ENCODE measurements at regions of chr19 and their contacts with region 1.

Region 1: DNA sequence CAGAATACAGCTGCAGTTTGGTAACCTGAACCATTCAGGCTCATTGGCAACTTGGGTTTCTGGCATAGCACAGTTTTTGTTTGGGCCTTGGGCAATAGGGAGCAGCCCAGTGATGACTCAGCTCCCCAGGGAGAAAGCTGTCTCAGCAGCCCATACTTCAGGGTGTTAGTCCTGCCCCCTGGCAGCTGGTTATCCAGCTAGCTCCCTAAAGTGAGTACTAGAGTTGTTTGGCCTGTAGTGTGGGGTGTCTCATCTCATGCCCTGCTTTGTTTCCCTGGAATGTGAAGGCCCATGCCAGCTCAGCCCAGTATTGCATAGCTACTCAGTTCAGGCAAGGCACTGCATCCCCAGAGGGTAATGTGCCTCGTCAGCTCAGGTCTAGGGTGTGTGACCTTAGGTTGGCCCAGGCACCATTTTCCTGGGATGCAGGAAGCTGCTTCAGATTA is 18.2 kb upstream of the ZNF543 start:
- DNase-seq: peak; percentile 98
- H3K4me3 Mint-ChIP-seq: peak overlapping the region; percentile 50
- H3K27ac Mint-ChIP-seq: peak overlapping the region; percentile 84
- H3K4me1 Mint-ChIP-seq: peaks cover 27% of the 10 kb centered on the region
- H3K27me3 Mint-ChIP-seq: no peaks in the 10 kb centered on the region
- CTCF ChIP-seq: no peak

Region 2: DNA sequence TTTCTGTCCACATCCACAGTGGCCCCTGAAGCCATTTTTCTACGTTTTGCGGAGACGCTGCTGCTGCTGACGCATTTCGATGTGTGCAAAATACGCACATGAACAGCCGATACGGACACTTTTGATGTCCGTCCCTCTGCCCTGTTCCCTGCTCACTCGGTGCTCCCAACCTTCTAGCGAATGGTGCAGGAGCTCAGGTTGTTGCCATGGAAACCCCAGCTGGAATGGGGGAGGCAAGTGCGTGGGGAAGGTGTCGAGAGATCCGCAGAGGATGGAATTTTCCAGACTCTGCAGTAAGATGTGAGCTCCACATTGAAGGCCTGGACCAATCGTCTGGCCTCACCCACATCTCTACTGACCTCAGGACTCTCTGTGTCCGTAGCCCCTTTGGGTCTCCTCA is 291.5 kb before region 1 on chr19:
- CTCF ChIA-PET with region 1: no interaction called
- POLR2A ChIA-PET with region 1: no interaction called
- intact Hi-C with region 1: no loop called
- DNase-seq: no peak
- H3K4me3 Mint-ChIP-seq: no peak overlapping the region
- H3K27ac Mint-ChIP-seq: no peak overlapping the region
- H3K4me1 Mint-ChIP-seq: no peaks in the 10 kb centered on the region
- H3K27me3 Mint-ChIP-seq: no peaks in the 10 kb centered on the region
- CTCF ChIP-seq: no peak

Region 3: GRCh38 chr19:57279418-57280066 is 22.5 kb before region 1 on chr19:
- CTCF ChIA-PET with region 1: interaction called, 5 read pairs
- POLR2A ChIA-PET with region 1: interaction called, 30 read pairs
- intact Hi-C with region 1: loop called (anchors 1 kb)
- DNase-seq: peak; percentile 99
- H3K4me3 Mint-ChIP-seq: no peak overlapping the region
- H3K27ac Mint-ChIP-seq: no peak overlapping the region
- H3K4me1 Mint-ChIP-seq: peaks cover 12% of the 10 kb centered on the region
- H3K27me3 Mint-ChIP-seq: no peaks in the 10 kb centered on the region
- CTCF ChIP-seq: no peak

Region 4: DNA sequence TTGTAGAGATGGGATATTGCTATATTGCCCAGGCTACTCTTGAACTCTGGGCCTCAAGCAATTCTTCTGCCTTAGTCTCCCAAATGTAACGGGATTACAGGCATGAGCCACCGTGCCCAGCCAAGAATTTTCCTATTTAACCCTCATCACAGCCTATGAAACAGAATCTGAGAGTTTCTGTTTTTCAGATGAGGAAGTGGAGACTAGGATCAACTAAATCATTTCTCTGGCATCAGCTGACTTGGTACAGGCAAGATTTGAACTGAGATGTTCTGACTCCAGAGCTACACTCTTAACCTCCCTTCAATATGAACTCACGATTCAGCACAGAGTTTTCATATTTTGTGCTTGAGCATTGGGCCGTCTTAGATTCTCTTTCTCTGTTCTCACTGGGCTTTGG is 13.7 kb before region 1 on chr19:
- CTCF ChIA-PET with region 1: interaction called, 7 read pairs
- POLR2A ChIA-PET with region 1: interaction called, 30 read pairs
- intact Hi-C with region 1: no loop called
- DNase-seq: no peak
- H3K4me3 Mint-ChIP-seq: no peak overlapping the region
- H3K27ac Mint-ChIP-seq: no peak overlapping the region
- H3K4me1 Mint-ChIP-seq: peaks cover 8% of the 10 kb centered on the region
- H3K27me3 Mint-ChIP-seq: no peaks in the 10 kb centered on the region
- CTCF ChIP-seq: no peak

Region 5: DNA sequence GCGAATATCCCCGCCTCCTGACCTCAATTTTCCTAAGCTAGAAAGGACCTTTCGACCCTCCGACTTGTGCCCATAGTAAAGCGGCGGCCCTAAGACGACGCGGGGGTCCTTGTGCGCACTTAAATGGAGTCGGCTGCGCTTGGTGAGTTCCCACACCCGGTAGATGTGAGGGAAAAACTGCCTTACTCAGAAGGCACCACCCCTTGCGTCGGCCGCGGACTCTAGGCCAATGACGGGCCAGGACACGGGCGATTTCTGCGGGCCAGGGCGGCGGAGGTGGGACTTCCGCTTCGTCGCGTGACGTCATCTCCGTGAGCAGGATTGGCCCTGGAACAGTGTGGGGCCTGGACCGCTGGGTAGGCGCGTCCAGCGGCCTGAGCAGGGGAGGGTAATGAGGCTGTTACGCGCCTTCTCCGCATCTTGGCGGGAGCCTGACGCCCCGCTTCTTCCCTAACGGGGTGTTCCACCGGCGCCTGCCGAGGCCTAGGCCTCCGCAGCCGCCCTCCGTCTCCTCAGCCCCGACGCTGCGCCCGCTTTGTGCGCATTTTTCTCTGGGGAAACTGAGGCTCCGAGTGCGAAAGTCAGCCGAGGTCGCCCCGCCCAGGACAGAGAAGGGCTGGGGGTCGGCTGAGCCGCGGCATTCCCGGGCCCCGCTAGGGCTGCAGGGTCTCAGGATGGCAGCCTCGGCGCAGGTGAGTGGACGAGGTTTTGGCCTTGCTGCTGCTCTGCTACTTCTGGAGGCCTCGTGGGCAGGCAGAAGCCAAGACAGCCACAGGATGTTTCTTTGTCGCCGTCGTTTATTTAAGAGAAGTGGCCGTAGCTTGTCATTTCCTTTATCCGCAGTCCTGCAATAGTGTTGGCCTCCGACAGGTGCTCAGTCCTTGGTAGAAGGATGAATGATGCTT is 18.4 kb after region 1 on chr19 and contains the start of gene ZNF543:
- CTCF ChIA-PET with region 1: interaction called, 6 read pairs
- POLR2A ChIA-PET with region 1: interaction called, 42 read pairs
- intact Hi-C with region 1: loop called (anchors 2 kb)
- DNase-seq: peak; percentile 98
- H3K4me3 Mint-ChIP-seq: peak within 1 kb of the TSS; percentile 81
- H3K27ac Mint-ChIP-seq: peak within 1 kb of the TSS; percentile 88
- H3K4me1 Mint-ChIP-seq: peaks cover 12% of the 10 kb centered on the region
- H3K27me3 Mint-ChIP-seq: peaks cover 4% of the 10 kb centered on the region
- CTCF ChIP-seq: no peak
- total RNA-seq, gene ZNF543: 9.2 and 10.8 TPM in 2 replicates

Region 6: GRCh38 chr19:57334191-57334590 is 32.1 kb after region 1 on chr19:
- CTCF ChIA-PET with region 1: interaction called, 4 read pairs
- POLR2A ChIA-PET with region 1: interaction called, 16 read pairs
- intact Hi-C with region 1: no loop called
- DNase-seq: peak; percentile 80
- H3K4me3 Mint-ChIP-seq: no peak overlapping the region
- H3K27ac Mint-ChIP-seq: peak overlapping the region; percentile 50
- H3K4me1 Mint-ChIP-seq: peaks cover 8% of the 10 kb centered on the region
- H3K27me3 Mint-ChIP-seq: no peaks in the 10 kb centered on the region
- CTCF ChIP-seq: no peak

Region 7: GRCh38 chr19:57350877-57351805 is 49.1 kb after region 1 on chr19 and contains the start of gene ZNF304:
- CTCF ChIA-PET with region 1: interaction called, 6 read pairs
- POLR2A ChIA-PET with region 1: interaction called, 18 read pairs
- intact Hi-C with region 1: no loop called
- DNase-seq: peak; percentile 98
- H3K4me3 Mint-ChIP-seq: peak within 1 kb of the TSS; percentile 90
- H3K27ac Mint-ChIP-seq: peak within 1 kb of the TSS; percentile 97
- H3K4me1 Mint-ChIP-seq: peaks cover 21% of the 10 kb centered on the region
- H3K27me3 Mint-ChIP-seq: no peaks in the 10 kb centered on the region
- CTCF ChIP-seq: no peak
- total RNA-seq, gene ZNF304: 7.0 and 9.9 TPM in 2 replicates

Region 8: DNA sequence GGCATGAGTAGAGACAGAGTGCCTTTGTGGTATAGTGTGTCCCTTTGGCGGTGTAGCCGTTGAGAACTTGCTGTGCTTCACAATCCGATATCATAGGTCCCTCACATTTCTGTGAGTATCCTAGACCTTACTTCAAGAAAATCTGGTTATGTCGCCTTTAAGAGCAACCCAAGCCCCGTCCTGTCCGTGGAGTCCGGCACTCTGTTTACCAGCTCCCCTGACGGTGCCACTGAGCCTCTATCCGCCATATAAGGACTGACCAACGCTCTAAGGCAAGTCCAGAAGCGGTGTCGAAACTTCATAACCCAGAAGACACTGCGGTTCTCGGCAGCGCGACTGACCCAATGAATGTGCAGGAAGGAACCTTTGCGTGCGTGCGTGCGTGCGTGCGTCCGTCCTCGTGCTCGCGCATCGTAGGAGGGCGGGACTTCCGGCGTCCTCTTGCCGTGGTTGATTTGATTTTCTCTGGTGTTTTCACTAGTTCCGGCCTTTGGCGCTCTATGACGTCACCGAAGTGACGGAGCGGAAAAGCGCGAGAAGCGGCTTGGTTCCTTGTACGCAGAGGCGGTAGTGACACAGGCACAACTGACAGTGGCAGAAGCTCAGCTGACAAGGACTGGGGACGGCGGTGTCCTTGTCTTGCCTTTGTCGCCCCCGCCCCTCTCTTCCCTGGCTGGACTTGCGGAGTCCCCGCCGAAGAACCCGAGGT is 61.1 kb after region 1 on chr19 and contains the starts of genes TRAPPC2B and ZNF547:
- CTCF ChIA-PET with region 1: no interaction called
- POLR2A ChIA-PET with region 1: interaction called, 14 read pairs
- intact Hi-C with region 1: no loop called
- DNase-seq: peak; percentile 99
- H3K4me3 Mint-ChIP-seq: peak within 1 kb of the TSS; percentile 98
- H3K27ac Mint-ChIP-seq: peak within 1 kb of the TSS; percentile 99
- H3K4me1 Mint-ChIP-seq: peaks cover 8% of the 10 kb centered on the region
- H3K27me3 Mint-ChIP-seq: no peaks in the 10 kb centered on the region
- CTCF ChIP-seq: no peak
- total RNA-seq, gene TRAPPC2B: 6.3 and 9.8 TPM in 2 replicates
- total RNA-seq, gene ZNF547: 3.7 and 4.3 TPM in 2 replicates

Region 9: GRCh38 chr19:57527136-57527881 is 225.3 kb after region 1 on chr19 and contains the start of gene ZNF549:
- CTCF ChIA-PET with region 1: no interaction called
- POLR2A ChIA-PET with region 1: no interaction called
- intact Hi-C with region 1: no loop called
- DNase-seq: peak; percentile 93
- H3K4me3 Mint-ChIP-seq: peak within 1 kb of the TSS; percentile 92
- H3K27ac Mint-ChIP-seq: peak within 1 kb of the TSS; percentile 74
- H3K4me1 Mint-ChIP-seq: peaks cover 17% of the 10 kb centered on the region
- H3K27me3 Mint-ChIP-seq: no peaks in the 10 kb centered on the region
- CTCF ChIP-seq: no peak
- total RNA-seq, gene ZNF549: 3.9 and 5.3 TPM in 2 replicates

Measured in MCF 10A (cell line).